Gastrocnemius medialis (tissue), 4 donors: ENCODE measurements at regions of chr6 and their contacts with region 1.

Region 1: DNA sequence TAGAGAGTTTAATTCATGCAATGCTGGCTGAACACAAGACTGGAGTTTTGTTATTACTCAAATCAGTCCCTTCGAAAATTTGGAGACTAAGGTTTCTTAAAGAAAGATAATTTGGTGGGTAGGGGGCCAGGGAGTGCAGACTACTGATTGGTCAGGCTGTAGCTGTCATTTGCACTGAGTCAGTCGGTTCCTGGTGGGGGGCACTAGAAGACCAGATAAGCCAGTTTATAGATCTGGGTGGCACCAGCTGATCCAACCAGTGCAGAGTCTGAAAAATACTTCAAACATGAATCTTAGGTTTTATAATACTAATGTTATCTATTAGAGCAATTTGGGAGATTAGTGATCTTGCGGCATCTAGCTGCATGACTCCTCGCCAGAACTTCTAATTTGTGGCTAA is 530.7 kb downstream of the NKAIN2 start:
- DNase-seq: no peak
- ATAC-seq: no peak
- H3K4me3 ChIP-seq: no peak overlapping the region
- H3K27ac ChIP-seq: no peak overlapping the region
- H3K4me1 ChIP-seq: no peaks in the 10 kb centered on the region
- H3K27me3 ChIP-seq: no peaks in the 10 kb centered on the region
- CTCF ChIP-seq: no peak
- POLR2A ChIP-seq: no peak

Region 2: DNA sequence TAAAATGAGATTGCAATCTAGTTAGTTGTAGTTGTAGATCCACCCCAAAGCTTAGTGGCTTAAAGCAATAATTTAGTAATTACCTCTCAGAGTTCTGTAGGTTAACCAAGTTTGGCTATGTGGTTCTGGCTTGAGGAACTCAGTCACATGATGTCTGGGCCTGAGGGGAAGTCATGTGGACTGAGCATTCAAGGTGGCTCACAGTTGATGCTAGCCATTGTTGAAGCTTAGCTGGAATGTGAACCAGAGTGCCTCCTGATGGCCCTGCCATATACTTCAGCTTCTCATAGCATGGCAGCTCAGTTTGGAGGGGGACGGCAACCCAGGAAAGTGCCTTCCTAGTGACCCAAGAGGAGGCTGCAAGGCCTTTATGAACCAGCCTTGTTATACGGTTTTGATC is 364.7 kb after region 1 on chr6:
- in situ Hi-C with region 1: loop called in 1 of 4 experiments (anchors 5 kb)
- intact Hi-C with region 1: no loop called
- DNase-seq: no peak
- ATAC-seq: no peak
- H3K4me3 ChIP-seq: no peak overlapping the region
- H3K27ac ChIP-seq: no peak overlapping the region
- H3K4me1 ChIP-seq: no peaks in the 10 kb centered on the region
- H3K27me3 ChIP-seq: no peaks in the 10 kb centered on the region
- CTCF ChIP-seq: no peak
- POLR2A ChIP-seq: no peak